ENCODE measurements at regions of chr1 and their contacts with region 1.

Region 1: GRCh38 chr1:180482425-180483275 is 19.7 kb downstream of the ACBD6 start:
- DNase-seq: no peak
- H3K4me3 ChIP-seq: no peak overlapping the region
- H3K27ac ChIP-seq: no peak overlapping the region
- H3K4me1 ChIP-seq: no peaks in the 10 kb centered on the region
- H3K27me3 ChIP-seq: no peaks in the 10 kb centered on the region
- CTCF ChIP-seq: peak; percentile 35 to 71 (median 71)

Region 2: DNA sequence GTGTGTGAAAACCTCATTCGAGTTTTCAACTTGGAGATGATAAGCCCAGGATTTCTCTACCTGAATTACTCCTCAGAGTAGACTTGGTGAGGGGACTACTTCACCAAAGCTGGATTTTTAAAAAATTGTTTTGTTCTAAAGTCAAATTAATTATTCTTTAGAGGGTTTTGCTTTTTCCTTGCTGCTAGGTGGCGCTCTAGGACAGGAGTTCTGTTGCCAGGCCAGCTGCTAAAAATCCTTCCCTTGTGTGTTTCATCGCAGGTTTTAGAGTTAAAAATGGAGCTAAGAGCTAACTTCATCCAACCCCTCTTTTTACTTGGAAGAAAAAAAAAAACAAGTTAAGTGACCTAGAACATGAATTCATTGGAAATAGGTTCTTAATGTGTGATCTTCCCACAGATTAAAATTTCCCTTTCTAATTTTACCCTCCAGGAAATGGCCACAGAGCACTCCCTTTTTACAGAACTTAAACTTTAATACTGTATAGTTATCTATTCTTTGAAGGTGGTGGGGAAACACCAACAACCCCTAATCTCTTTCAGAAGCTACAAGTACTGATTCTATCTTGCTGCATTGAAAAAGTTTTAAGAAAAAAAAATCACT is 776.2 kb before region 1 on chr1:
- intact Hi-C with region 1: loop called (anchors 5 kb)
- DNase-seq: no peak
- H3K4me3 ChIP-seq: no peak overlapping the region
- H3K27ac ChIP-seq: no peak overlapping the region
- H3K4me1 ChIP-seq: no peaks in the 10 kb centered on the region
- H3K27me3 ChIP-seq: no peaks in the 10 kb centered on the region
- CTCF ChIP-seq: peak; percentile 19 to 76 (median 36)

Region 3: DNA sequence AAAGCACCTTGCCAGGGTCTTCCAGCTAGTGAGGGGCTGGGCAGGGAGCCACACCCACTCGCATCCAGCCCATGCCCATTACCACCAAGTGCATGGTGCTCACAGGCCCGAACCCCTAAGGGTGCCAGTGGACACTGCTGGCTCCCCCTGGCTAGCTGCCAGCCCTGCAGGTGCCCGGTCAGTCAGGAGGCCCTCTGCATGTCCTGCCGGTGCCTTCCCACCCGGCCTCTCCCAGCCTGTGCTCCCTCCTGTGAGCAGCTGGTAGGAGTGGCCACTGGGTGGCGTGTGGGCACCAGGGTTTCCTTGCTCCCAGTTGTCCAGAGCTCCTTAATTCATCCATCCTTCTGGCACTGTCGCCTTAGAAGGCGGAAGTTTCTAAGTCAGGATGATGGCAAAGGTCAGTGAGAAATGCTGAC is 294.6 kb before region 1 on chr1:
- intact Hi-C with region 1: loop called (anchors 5 kb)
- DNase-seq: no peak
- H3K4me3 ChIP-seq: no peak overlapping the region
- H3K27ac ChIP-seq: no peak overlapping the region
- H3K4me1 ChIP-seq: no peaks in the 10 kb centered on the region
- H3K27me3 ChIP-seq: no peaks in the 10 kb centered on the region
- CTCF ChIP-seq: peak in 2 of 3 experiments; percentile 10 to 45

Region 4: DNA sequence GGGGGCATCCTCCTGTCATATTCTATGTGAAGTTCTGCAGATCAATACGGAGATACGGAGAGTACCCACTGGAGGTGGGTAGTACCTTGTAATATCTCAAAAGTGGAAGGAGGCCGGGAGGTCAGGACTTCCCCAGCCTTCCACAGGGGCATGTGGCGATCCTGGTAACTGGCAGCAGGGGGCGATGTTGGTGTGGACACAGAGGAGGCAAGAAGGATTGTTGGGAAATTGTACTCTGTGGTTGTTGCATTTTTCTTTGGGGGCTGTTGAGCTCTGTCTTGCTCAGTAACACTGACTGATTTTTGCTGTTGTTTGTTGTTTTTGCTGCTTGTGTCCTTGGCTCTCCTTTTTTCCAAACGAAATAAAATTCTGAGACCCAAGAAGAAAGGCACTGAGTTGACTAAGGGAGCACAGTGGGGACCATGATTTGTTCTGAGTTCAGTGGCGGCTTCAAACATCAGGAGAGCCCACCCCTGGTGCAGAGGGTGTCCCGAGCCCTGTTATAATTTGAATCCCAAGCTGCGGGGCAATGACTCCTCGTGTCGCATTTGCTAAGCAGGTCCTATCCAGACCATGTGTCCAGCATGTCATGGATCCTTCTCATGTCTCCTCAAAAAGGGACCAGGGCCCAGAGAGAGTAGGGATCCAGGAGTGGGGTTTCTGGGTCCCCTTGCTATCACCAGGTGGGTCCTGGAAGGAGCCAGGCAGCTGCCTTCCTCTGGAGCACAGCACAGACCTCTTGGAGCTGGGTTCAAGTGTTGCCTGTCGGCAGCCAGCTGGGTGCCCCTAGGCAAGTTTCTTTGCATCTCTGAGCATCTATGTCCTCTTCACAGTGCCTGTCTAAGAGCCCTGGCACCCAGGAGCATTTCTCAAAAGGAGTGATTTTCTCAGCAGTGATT is 229.8 kb before region 1 on chr1:
- intact Hi-C with region 1: loop called (anchors 2 kb)
- DNase-seq: peak; percentile 37 to 78
- H3K4me3 ChIP-seq: no peak overlapping the region
- H3K27ac ChIP-seq: no peak overlapping the region
- H3K4me1 ChIP-seq: no peaks in the 10 kb centered on the region
- H3K27me3 ChIP-seq: peaks cover 10% of the 10 kb centered on the region
- CTCF ChIP-seq: peak; percentile 51 to 80 (median 69)

Region 5: DNA sequence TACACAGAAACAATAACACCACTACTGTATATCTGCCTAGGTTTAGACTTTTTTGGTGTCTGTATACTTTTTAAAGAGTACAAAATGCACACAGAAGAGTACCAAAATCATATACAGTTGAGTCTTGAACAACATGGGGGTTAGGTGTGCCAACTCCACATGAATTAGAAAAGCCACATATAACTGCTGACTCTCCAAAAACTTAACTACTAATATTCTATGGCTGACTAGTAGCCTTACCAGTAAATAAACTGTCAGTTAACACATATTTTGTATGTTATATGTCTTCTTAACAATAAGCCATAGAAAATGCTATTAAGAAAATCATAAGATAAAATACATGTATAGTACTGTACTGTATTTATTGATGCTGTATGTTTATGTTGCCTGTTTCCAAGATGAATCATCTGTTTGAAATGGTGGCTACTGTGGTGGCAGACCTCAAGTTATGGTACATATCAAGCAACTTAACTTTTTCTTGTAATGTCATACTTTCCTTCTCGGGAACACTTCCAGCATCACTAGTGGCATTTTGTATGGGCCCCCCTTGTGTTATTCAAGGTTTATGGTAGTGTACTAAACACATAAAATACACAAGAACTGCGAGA is 181.4 kb before region 1 on chr1:
- intact Hi-C with region 1: no loop called
- DNase-seq: no peak
- H3K4me3 ChIP-seq: no peak overlapping the region
- H3K27ac ChIP-seq: no peak overlapping the region
- H3K4me1 ChIP-seq: no peaks in the 10 kb centered on the region
- H3K27me3 ChIP-seq: no peaks in the 10 kb centered on the region
- CTCF ChIP-seq: no peak

Measured in ascending aorta (tissue), 2 donors.